Caco-2 (cell line): ENCODE measurements at regions of chr6 and their contacts with region 1.

Region 1: GRCh38 chr6:114144887-114145851 is 174.2 kb upstream of the HDAC2 start:
- DNase-seq: peak; percentile 88 to 93
- H3K4me3 ChIP-seq: no peak overlapping the region
- H3K4me3 Mint-ChIP-seq: peak overlapping the region; percentile 70
- H3K27ac Mint-ChIP-seq: peak overlapping the region; percentile 84
- H3K4me1 ChIP-seq: peaks cover 38% of the 10 kb centered on the region
- H3K4me1 Mint-ChIP-seq: peaks cover 34% of the 10 kb centered on the region
- H3K27me3 ChIP-seq: no peaks in the 10 kb centered on the region
- H3K27me3 Mint-ChIP-seq: no peaks in the 10 kb centered on the region
- CTCF ChIP-seq: no peak

Region 2: DNA sequence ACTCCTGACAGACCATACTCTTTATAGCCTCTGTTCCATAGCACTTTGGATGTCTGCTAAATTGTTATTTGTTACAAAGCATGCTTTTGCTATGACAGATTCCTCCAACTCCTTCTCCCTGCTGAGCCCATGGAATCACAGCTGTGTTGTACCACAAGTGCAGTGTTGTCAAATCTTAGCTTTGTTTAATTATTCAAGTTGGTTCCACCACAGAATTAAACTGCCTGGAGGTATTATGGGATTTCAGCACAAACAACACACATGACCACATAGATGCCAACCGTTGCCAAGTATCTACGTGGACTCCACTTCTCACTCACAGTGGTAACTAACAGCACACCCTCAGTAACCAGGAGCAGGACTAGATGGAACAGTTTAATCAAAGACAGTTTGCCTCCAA is 320.8 kb before region 1 on chr6:
- CTCF ChIA-PET with region 1: no interaction called
- POLR2A ChIA-PET with region 1: no interaction called
- intact Hi-C with region 1: no loop called
- DNase-seq: no peak
- H3K4me3 ChIP-seq: no peak overlapping the region
- H3K4me3 Mint-ChIP-seq: no peak overlapping the region
- H3K27ac Mint-ChIP-seq: no peak overlapping the region
- H3K4me1 ChIP-seq: peaks cover 5% of the 10 kb centered on the region; the same call in 1 of the 2 replicates
- H3K4me1 Mint-ChIP-seq: no peaks in the 10 kb centered on the region
- H3K27me3 ChIP-seq: no peaks in the 10 kb centered on the region
- H3K27me3 Mint-ChIP-seq: no peaks in the 10 kb centered on the region
- CTCF ChIP-seq: no peak

Region 3: GRCh38 chr6:113970805-113971676 is 174.1 kb before region 1 on chr6 and contains the start of gene HDAC2:
- CTCF ChIA-PET with region 1: no interaction called
- POLR2A ChIA-PET with region 1: no interaction called
- intact Hi-C with region 1: loop called (anchors 1 kb)
- DNase-seq: peak; percentile 94
- H3K4me3 ChIP-seq: peak within 1 kb of the TSS; percentile 97
- H3K4me3 Mint-ChIP-seq: peak within 1 kb of the TSS; percentile 98
- H3K27ac Mint-ChIP-seq: peak within 1 kb of the TSS; percentile 99
- H3K4me1 ChIP-seq: peaks cover 8% of the 10 kb centered on the region; the same call in 1 of the 2 replicates
- H3K4me1 Mint-ChIP-seq: peaks cover 28% of the 10 kb centered on the region
- H3K27me3 ChIP-seq: no peaks in the 10 kb centered on the region
- H3K27me3 Mint-ChIP-seq: no peaks in the 10 kb centered on the region
- CTCF ChIP-seq: no peak
- total RNA-seq, gene HDAC2: 197 and 201 TPM in 2 replicates

Region 4: DNA sequence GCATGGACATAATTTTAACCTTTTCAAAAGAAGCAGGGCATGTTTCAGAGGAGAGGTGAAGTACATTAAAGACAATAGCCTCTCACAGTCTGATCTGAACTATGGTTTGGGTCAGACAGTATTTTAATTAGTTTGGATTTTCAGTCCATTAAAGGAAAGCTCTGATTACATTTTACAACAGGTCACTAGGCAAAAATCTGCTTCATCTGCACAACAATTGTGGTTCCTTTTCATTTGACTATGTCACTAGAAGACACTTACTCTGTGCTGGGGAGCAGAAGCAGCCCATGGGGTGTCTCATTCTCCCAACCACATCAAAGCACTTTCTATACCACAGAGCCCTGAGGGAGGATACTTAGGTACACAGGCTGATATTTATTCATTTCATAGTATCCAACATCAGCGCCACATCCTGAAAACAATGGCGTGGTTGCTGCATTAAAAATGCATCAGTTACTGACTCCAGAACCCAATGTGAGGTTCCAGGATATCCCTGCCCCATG is 137.7 kb before region 1 on chr6:
- CTCF ChIA-PET with region 1: no interaction called
- POLR2A ChIA-PET with region 1: no interaction called
- intact Hi-C with region 1: loop called (anchors 1 kb)
- DNase-seq: no peak
- H3K4me3 ChIP-seq: no peak overlapping the region
- H3K4me3 Mint-ChIP-seq: no peak overlapping the region
- H3K27ac Mint-ChIP-seq: no peak overlapping the region
- H3K4me1 ChIP-seq: peaks cover 26% of the 10 kb centered on the region
- H3K4me1 Mint-ChIP-seq: peaks cover 6% of the 10 kb centered on the region
- H3K27me3 ChIP-seq: no peaks in the 10 kb centered on the region
- H3K27me3 Mint-ChIP-seq: no peaks in the 10 kb centered on the region
- CTCF ChIP-seq: no peak

Region 5: DNA sequence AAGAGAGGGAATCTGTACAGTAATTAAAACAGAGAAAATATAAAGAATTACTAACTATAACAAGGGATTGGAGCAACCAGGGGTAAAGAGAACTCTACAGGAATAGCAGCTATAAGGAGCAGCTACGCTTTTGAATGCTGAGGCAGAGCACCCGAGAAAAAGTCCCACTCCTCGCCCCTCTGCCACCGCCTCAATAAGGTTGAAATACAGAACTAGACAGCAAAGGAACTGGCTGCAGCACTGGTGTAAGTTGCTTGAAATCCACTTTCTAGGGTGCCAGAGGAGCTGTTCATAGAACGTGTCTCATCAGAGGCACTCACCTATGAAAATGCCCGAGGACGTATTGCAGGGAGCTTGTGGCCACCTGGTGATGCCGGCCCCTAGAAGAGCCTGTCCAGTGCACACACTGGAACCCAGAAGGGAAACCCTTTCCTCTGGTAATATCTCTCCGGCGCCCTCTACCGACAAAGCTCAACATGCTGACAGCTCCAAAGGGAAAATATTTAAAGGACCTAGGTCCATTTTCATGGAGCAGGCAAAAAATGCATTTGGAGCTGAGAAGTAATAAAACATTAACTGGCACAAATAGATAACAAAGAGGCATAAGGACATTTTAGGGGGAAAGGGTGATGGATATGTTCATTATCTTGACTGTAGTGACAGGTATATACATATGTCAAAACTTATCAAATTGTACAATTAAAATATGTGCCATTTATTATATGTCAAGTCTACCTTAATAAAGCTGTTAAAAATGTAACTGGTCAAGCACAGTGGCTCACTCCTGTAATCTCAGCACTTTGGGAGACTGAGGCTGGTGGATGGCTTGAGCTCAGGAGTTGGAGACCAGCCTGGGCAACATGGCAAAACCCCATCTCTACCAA is 36.8 kb before region 1 on chr6:
- CTCF ChIA-PET with region 1: interaction called, 15 read pairs
- POLR2A ChIA-PET with region 1: no interaction called
- intact Hi-C with region 1: loop called (anchors 1 kb)
- DNase-seq: peak; percentile 85 to 87
- H3K4me3 ChIP-seq: no peak overlapping the region
- H3K4me3 Mint-ChIP-seq: no peak overlapping the region
- H3K27ac Mint-ChIP-seq: no peak overlapping the region
- H3K4me1 ChIP-seq: peaks cover 5% of the 10 kb centered on the region; the same call in 1 of the 2 replicates
- H3K4me1 Mint-ChIP-seq: peaks cover 13% of the 10 kb centered on the region
- H3K27me3 ChIP-seq: no peaks in the 10 kb centered on the region
- H3K27me3 Mint-ChIP-seq: no peaks in the 10 kb centered on the region
- CTCF ChIP-seq: peak; percentile 76 to 79

Region 6: GRCh38 chr6:114167583-114168576 is 22.7 kb after region 1 on chr6:
- CTCF ChIA-PET with region 1: interaction called, 5 read pairs
- POLR2A ChIA-PET with region 1: interaction called, 4 read pairs
- intact Hi-C with region 1: loop called (anchors 1 kb)
- DNase-seq: peak; percentile 36 to 38
- H3K4me3 ChIP-seq: no peak overlapping the region
- H3K4me3 Mint-ChIP-seq: peak overlapping the region; percentile 52
- H3K27ac Mint-ChIP-seq: peak overlapping the region; percentile 12
- H3K4me1 ChIP-seq: peaks cover 48% of the 10 kb centered on the region
- H3K4me1 Mint-ChIP-seq: peaks cover 26% of the 10 kb centered on the region
- H3K27me3 ChIP-seq: no peaks in the 10 kb centered on the region
- H3K27me3 Mint-ChIP-seq: no peaks in the 10 kb centered on the region
- CTCF ChIP-seq: no peak

Region 7: GRCh38 chr6:114272582-114272981 is 127.4 kb after region 1 on chr6:
- CTCF ChIA-PET with region 1: no interaction called
- POLR2A ChIA-PET with region 1: no interaction called
- intact Hi-C with region 1: loop called (anchors 1 kb)
- DNase-seq: peak; percentile 35 to 51
- H3K4me3 ChIP-seq: no peak overlapping the region
- H3K4me3 Mint-ChIP-seq: no peak overlapping the region
- H3K27ac Mint-ChIP-seq: no peak overlapping the region
- H3K4me1 ChIP-seq: peaks cover 20% of the 10 kb centered on the region
- H3K4me1 Mint-ChIP-seq: no peaks in the 10 kb centered on the region
- H3K27me3 ChIP-seq: no peaks in the 10 kb centered on the region
- H3K27me3 Mint-ChIP-seq: no peaks in the 10 kb centered on the region
- CTCF ChIP-seq: no peak

Region 8: GRCh38 chr6:114419175-114419574 is 274.0 kb after region 1 on chr6:
- CTCF ChIA-PET with region 1: no interaction called
- POLR2A ChIA-PET with region 1: no interaction called
- intact Hi-C with region 1: loop called (anchors 1 kb)
- DNase-seq: peak; percentile 45 to 51
- H3K4me3 ChIP-seq: no peak overlapping the region
- H3K4me3 Mint-ChIP-seq: no peak overlapping the region
- H3K27ac Mint-ChIP-seq: no peak overlapping the region
- H3K4me1 ChIP-seq: peaks cover 8% of the 10 kb centered on the region
- H3K4me1 Mint-ChIP-seq: no peaks in the 10 kb centered on the region
- H3K27me3 ChIP-seq: no peaks in the 10 kb centered on the region
- H3K27me3 Mint-ChIP-seq: no peaks in the 10 kb centered on the region
- CTCF ChIP-seq: no peak

Region 9: DNA sequence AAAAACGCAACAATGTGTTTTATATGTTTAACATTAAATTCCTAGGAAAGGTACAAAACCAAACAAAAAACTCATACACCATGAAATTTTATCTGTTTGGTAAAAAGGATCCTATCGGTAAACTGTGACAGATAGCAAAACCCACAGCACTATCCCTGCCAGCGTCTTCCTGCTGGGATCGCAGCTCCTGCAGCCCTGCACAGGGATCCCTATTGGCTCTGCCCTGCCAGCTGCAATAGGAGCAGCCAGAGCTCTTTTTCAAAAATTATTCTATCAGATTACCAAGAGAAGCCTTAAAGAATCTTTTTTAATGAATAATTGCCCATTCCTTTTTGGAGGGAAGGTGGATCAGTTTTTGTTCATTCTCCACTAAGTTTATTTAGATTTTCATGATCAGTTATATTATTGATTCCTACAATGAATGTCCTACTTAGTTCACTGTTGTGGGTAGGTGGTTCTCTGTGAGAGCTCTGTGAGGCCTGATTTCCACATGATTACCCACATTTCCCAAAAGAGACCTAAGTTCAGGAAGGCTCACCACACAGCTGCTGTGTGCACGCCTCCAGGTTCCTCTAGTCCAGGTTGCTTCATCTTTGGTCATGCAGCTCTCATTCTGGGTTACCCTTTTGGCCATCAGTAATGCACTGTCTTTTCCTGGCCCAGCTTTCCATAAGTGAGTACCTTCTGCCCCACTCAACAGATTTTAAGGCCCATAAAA is 1621.7 kb after region 1 on chr6:
- CTCF ChIA-PET with region 1: no interaction called
- POLR2A ChIA-PET with region 1: no interaction called
- intact Hi-C with region 1: no loop called
- DNase-seq: no peak
- H3K4me3 ChIP-seq: no peak overlapping the region
- H3K4me3 Mint-ChIP-seq: no peak overlapping the region
- H3K27ac Mint-ChIP-seq: no peak overlapping the region
- H3K4me1 ChIP-seq: no peaks in the 10 kb centered on the region
- H3K4me1 Mint-ChIP-seq: no peaks in the 10 kb centered on the region
- H3K27me3 ChIP-seq: no peaks in the 10 kb centered on the region
- H3K27me3 Mint-ChIP-seq: no peaks in the 10 kb centered on the region
- CTCF ChIP-seq: no peak